HepG2 (cell line): ENCODE measurements at regions of chr2 and their contacts with region 1.

Region 1: GRCh38 chr2:199471443-199472057 is 13.8 kb upstream of the SATB2 start:
- DNase-seq: peak; percentile 53
- ATAC-seq: peak; percentile 97
- H3K4me3 ChIP-seq: no peak overlapping the region; a peak in 1 of 6 replicates
- H3K27ac ChIP-seq: no peak overlapping the region
- H3K4me1 ChIP-seq: 0 out of 2 replicates have a peak, but pooled peaks cover 12% of the 10 kb centered on the region
- H3K27me3 ChIP-seq: peaks cover 16 to 88% of the 10 kb centered on the region in 2 experiments; a peak in 4 of 5 replicates
- CTCF ChIP-seq: peak; percentile 86
- EP300 ChIP-seq: no peak
- POLR2A ChIP-seq: no peak
- RAD21 ChIP-seq: peak; percentile 79

Region 2: GRCh38 chr2:199434555-199434954 is 37.0 kb before region 1 on chr2:
- CTCF ChIA-PET with region 1: no interaction called
- POLR2A ChIA-PET with region 1: no interaction called
- in situ Hi-C with region 1: no loop called
- intact Hi-C with region 1: loop called (anchors 1 kb)
- DNase-seq: no peak
- ATAC-seq: no peak
- H3K4me3 ChIP-seq: no peak overlapping the region
- H3K27ac ChIP-seq: no peak overlapping the region
- H3K4me1 ChIP-seq: no peaks in the 10 kb centered on the region
- H3K27me3 ChIP-seq: no peaks in the 10 kb centered on the region
- CTCF ChIP-seq: no peak
- EP300 ChIP-seq: no peak
- POLR2A ChIP-seq: no peak
- RAD21 ChIP-seq: no peak

Region 3: GRCh38 chr2:199446996-199447576 is 24.5 kb before region 1 on chr2:
- CTCF ChIA-PET with region 1: no interaction called
- POLR2A ChIA-PET with region 1: no interaction called
- in situ Hi-C with region 1: no loop called
- intact Hi-C with region 1: no loop called
- DNase-seq: no peak
- ATAC-seq: no peak; the same call in 1 of the 3 replicates
- H3K4me3 ChIP-seq: no peak overlapping the region
- H3K27ac ChIP-seq: no peak overlapping the region
- H3K4me1 ChIP-seq: no peaks in the 10 kb centered on the region
- H3K27me3 ChIP-seq: no peaks in the 10 kb centered on the region
- CTCF ChIP-seq: no peak
- EP300 ChIP-seq: no peak
- POLR2A ChIP-seq: no peak
- RAD21 ChIP-seq: no peak

Region 4: GRCh38 chr2:200811336-200812121 is 1340.0 kb after region 1 on chr2 and contains the start of gene BZW1:
- CTCF ChIA-PET with region 1: no interaction called
- POLR2A ChIA-PET with region 1: no interaction called
- in situ Hi-C with region 1: no loop called
- intact Hi-C with region 1: no loop called
- DNase-seq: peak; percentile 95
- ATAC-seq: peak; percentile 89
- H3K4me3 ChIP-seq: peak within 1 kb of the TSS; percentile 89 to 99 (median 92)
- H3K27ac ChIP-seq: peak within 1 kb of the TSS; percentile 95
- H3K4me1 ChIP-seq: peaks cover 52% of the 10 kb centered on the region
- H3K27me3 ChIP-seq: no peaks in the 10 kb centered on the region; a peak in 1 of 5 replicates
- CTCF ChIP-seq: no peak; the same call in 1 of the 2 replicates
- EP300 ChIP-seq: peak in 1 of 2 experiments; percentile 22; a peak in 1 of 4 replicates
- POLR2A ChIP-seq: peak; percentile 90 to 96
- RAD21 ChIP-seq: no peak
- total RNA-seq, gene BZW1: 384 and 709 TPM in 2 replicates